GM13976 (cell line): ENCODE measurements at regions of chr14 and their contacts with region 1.

Region 1: GRCh38 chr14:70635971-70636595 is 5.6 kb upstream of the TTC9 start:
- DNase-seq: no peak
- CTCF ChIP-seq: no peak

Region 2: GRCh38 chr14:70714055-70714621 is 78.1 kb after region 1 on chr14:
- in situ Hi-C with region 1: loop called (anchors 10 kb)
- DNase-seq: no peak
- CTCF ChIP-seq: peak; percentile 36